CD4-positive, alpha-beta memory T cell (primary cell): ENCODE measurements at regions of chrX and their contacts with region 1.

Region 1: DNA sequence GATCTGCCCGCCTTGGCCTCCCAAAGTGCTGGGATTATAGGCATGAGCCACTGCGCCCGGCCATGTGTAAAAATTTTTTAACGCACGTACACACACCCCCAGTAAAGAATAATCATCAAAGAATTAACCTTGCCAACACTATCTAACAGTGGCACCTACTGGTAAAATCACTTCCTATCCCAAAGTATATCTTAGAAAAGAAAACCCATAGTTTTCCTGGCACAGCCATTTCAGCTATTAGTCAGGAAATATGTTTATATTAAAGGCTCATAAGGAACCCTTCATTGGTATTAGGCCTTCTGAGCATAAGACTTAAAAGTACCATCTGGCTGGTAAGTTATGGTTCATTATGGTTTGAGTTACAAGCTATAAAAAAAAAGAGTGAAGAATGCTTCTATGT is 14.1 kb downstream of the S100G start:
- DNase-seq: no peak
- H3K4me3 ChIP-seq: no peak overlapping the region
- H3K4me3 Mint-ChIP-seq: no peak overlapping the region
- H3K27ac ChIP-seq: no peak overlapping the region
- H3K27ac Mint-ChIP-seq: peak overlapping the region in 1 of 7 donors; percentile 47
- H3K4me1 ChIP-seq: no peaks in the 10 kb centered on the region
- H3K4me1 Mint-ChIP-seq: no peaks in the 10 kb centered on the region
- H3K27me3 ChIP-seq: no peaks in the 10 kb centered on the region
- H3K27me3 Mint-ChIP-seq: no peaks in the 10 kb centered on the region

Region 2: DNA sequence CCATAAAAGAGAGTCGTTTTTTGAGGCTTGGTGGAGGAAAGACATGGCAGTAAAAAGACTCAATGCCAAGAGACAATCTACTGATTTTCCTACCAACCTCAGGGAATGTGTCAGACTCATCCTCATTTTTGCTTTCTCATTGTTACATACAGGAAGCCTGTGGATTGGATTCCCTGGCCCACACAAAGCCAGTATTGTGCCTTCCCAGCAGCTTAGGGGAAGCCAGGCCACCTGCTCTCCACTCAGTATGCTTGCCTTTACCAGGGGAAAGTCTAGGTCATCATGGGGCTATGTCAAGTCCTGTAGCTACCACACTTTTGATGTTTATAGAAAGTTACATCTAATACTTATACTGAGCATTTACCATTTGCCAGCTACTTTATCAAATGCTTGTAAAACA is 1152.5 kb before region 1 on chrX:
- CTCF ChIA-PET with region 1: no interaction called
- POLR2A ChIA-PET with region 1: no interaction called
- intact Hi-C with region 1: no loop called
- DNase-seq: no peak
- H3K4me3 ChIP-seq: no peak overlapping the region
- H3K4me3 Mint-ChIP-seq: no peak overlapping the region
- H3K27ac ChIP-seq: no peak overlapping the region
- H3K27ac Mint-ChIP-seq: no peak overlapping the region
- H3K4me1 ChIP-seq: no peaks in the 10 kb centered on the region
- H3K4me1 Mint-ChIP-seq: no peaks in the 10 kb centered on the region
- H3K27me3 ChIP-seq: no peaks in the 10 kb centered on the region
- H3K27me3 Mint-ChIP-seq: peaks cover 0 to 1% of the 10 kb centered on the region in 2 donors

Region 3: DNA sequence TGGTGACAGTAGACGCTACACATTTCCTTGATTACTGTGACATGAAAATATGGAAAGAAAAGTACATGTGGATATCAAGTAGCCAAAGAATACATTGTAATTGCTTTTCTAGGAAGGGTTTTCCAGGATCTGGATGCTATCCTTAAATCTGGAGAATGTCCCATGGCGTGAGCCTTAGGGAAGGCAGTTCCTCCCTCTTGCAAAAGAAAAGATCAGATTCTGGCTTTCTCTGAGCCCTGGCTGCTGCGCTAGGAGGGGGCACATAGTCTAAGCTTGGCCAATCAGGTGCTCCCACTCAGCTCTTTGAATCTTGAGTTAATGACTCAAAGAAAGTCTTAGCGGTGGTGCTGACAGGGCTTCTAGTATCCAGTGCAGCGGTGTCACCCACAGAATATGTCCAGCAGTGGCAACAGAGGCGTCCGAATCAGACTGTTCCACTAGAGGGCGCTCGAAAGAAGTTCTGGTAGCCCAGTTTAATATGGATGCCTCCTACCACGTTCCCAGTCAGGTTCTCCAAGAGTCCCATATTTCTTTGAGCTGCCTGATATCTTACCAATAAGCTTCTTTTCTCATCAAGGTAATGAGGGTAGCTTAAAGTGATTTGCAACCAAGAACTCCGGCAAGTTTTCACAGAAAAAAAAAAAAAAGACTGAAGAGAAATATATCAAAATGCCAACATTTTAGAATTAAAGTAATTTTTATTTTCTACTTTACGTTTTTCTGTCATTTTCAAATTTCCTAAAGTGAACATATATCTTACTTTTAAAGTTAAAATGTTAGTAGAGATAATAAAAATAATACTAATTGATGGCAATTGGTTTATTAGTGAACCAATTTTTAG is 227.5 kb before region 1 on chrX:
- CTCF ChIA-PET with region 1: interaction called, 11 read pairs
- POLR2A ChIA-PET with region 1: no interaction called
- intact Hi-C with region 1: no loop called
- DNase-seq: peak in 4 of 5 donors; percentile 43 to 52 (median 48)
- H3K4me3 ChIP-seq: no peak overlapping the region
- H3K4me3 Mint-ChIP-seq: no peak overlapping the region
- H3K27ac ChIP-seq: no peak overlapping the region
- H3K27ac Mint-ChIP-seq: no peak overlapping the region
- H3K4me1 ChIP-seq: peaks cover 13% of the 10 kb centered on the region
- H3K4me1 Mint-ChIP-seq: peaks cover 5 to 15% (median 11%) of the 10 kb centered on the region in 4 donors
- H3K27me3 ChIP-seq: no peaks in the 10 kb centered on the region
- H3K27me3 Mint-ChIP-seq: no peaks in the 10 kb centered on the region

Region 4: GRCh38 chrX:16619024-16619423 is 45.0 kb before region 1 on chrX:
- CTCF ChIA-PET with region 1: no interaction called
- POLR2A ChIA-PET with region 1: no interaction called
- intact Hi-C with region 1: no loop called
- DNase-seq: no peak
- H3K4me3 ChIP-seq: no peak overlapping the region
- H3K4me3 Mint-ChIP-seq: no peak overlapping the region
- H3K27ac ChIP-seq: no peak overlapping the region
- H3K27ac Mint-ChIP-seq: no peak overlapping the region
- H3K4me1 ChIP-seq: no peaks in the 10 kb centered on the region
- H3K4me1 Mint-ChIP-seq: peaks cover 0 to 4% (median 1%) of the 10 kb centered on the region in 4 donors
- H3K27me3 ChIP-seq: no peaks in the 10 kb centered on the region
- H3K27me3 Mint-ChIP-seq: no peaks in the 10 kb centered on the region

Region 5: GRCh38 chrX:16633754-16634153 is 30.3 kb before region 1 on chrX:
- CTCF ChIA-PET with region 1: no interaction called
- POLR2A ChIA-PET with region 1: no interaction called
- intact Hi-C with region 1: no loop called
- DNase-seq: no peak
- H3K4me3 ChIP-seq: no peak overlapping the region
- H3K4me3 Mint-ChIP-seq: no peak overlapping the region
- H3K27ac ChIP-seq: no peak overlapping the region
- H3K27ac Mint-ChIP-seq: no peak overlapping the region
- H3K4me1 ChIP-seq: no peaks in the 10 kb centered on the region
- H3K4me1 Mint-ChIP-seq: peaks cover 0 to 8% (median 2%) of the 10 kb centered on the region in 4 donors
- H3K27me3 ChIP-seq: no peaks in the 10 kb centered on the region
- H3K27me3 Mint-ChIP-seq: no peaks in the 10 kb centered on the region

Region 6: GRCh38 chrX:16733013-16733412 is 68.9 kb after region 1 on chrX:
- CTCF ChIA-PET with region 1: no interaction called
- POLR2A ChIA-PET with region 1: no interaction called
- intact Hi-C with region 1: no loop called
- DNase-seq: no peak
- H3K4me3 ChIP-seq: no peak overlapping the region
- H3K4me3 Mint-ChIP-seq: no peak overlapping the region
- H3K27ac ChIP-seq: no peak overlapping the region
- H3K27ac Mint-ChIP-seq: peak overlapping the region in 2 of 7 donors; percentile 5 to 14
- H3K4me1 ChIP-seq: no peaks in the 10 kb centered on the region
- H3K4me1 Mint-ChIP-seq: peaks cover 0 to 3% (median under 1%) of the 10 kb centered on the region in 4 donors
- H3K27me3 ChIP-seq: no peaks in the 10 kb centered on the region
- H3K27me3 Mint-ChIP-seq: no peaks in the 10 kb centered on the region